ENCODE measurements at regions of chr13 and their contacts with region 1.

Region 1: GRCh38 chr13:28636674-28637317 is 22.1 kb upstream of the POMP start:
- DNase-seq: peak; percentile 65 to 95 (median 82)
- H3K4me3 ChIP-seq: no peak overlapping the region
- H3K4me3 Mint-ChIP-seq: peak overlapping the region in 1 of 2 donors; percentile 40
- H3K27ac ChIP-seq: no peak overlapping the region
- H3K27ac Mint-ChIP-seq: peak overlapping the region in 2 of 7 donors; percentile 18 to 59
- H3K4me1 ChIP-seq: peaks cover 4 to 8% of the 10 kb centered on the region in 2 donors
- H3K4me1 Mint-ChIP-seq: peaks cover 5% of the 10 kb centered on the region
- H3K27me3 ChIP-seq: peaks cover 6 to 8% of the 10 kb centered on the region in 2 donors
- H3K27me3 Mint-ChIP-seq: peaks cover 13 to 18% (median 14%) of the 10 kb centered on the region in 3 donors
- CTCF ChIP-seq: peak; percentile 90

Region 2: GRCh38 chr13:28204690-28205443 is 431.9 kb before region 1 on chr13:
- intact Hi-C with region 1: no loop called
- DNase-seq: no peak
- H3K4me3 ChIP-seq: no peak overlapping the region
- H3K4me3 Mint-ChIP-seq: no peak overlapping the region
- H3K27ac ChIP-seq: no peak overlapping the region
- H3K27ac Mint-ChIP-seq: no peak overlapping the region
- H3K4me1 ChIP-seq: no peaks in the 10 kb centered on the region
- H3K4me1 Mint-ChIP-seq: no peaks in the 10 kb centered on the region
- H3K27me3 ChIP-seq: no peaks in the 10 kb centered on the region
- H3K27me3 Mint-ChIP-seq: no peaks in the 10 kb centered on the region
- CTCF ChIP-seq: no peak

Region 3: GRCh38 chr13:28324181-28324789 is 312.5 kb before region 1 on chr13:
- intact Hi-C with region 1: loop called (anchors 1 to 5 kb)
- DNase-seq: peak; percentile 55 to 75 (median 64)
- H3K4me3 ChIP-seq: no peak overlapping the region
- H3K4me3 Mint-ChIP-seq: no peak overlapping the region
- H3K27ac ChIP-seq: no peak overlapping the region
- H3K27ac Mint-ChIP-seq: no peak overlapping the region
- H3K4me1 ChIP-seq: no peaks in the 10 kb centered on the region
- H3K4me1 Mint-ChIP-seq: no peaks in the 10 kb centered on the region
- H3K27me3 ChIP-seq: peaks cover 8 to 28% of the 10 kb centered on the region in 2 donors
- H3K27me3 Mint-ChIP-seq: peaks cover 15 to 46% (median 45%) of the 10 kb centered on the region in 3 donors
- CTCF ChIP-seq: peak; percentile 84

Region 4: DNA sequence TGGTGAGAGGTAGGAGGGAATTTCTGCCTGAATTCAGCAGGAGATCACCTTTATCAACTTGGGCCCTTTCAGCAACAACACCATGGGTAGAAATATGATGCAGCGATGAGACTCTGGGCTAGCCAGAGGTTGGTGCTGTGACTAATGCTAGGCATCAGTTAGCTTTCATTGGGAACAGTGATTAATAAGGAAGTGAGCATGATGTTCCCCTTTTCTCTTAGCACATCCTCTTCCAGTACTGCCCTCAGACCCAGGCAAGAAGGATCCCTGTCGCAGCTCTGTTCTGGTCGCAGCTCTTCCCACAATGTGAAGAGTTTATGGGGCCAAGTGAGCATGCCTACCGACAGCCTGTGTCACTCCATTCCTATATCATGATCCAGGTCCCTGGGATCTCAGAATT is 242.4 kb before region 1 on chr13:
- intact Hi-C with region 1: loop called in 1 of 2 experiments (anchors 10 kb)
- DNase-seq: peak; percentile 83 to 96 (median 95)
- H3K4me3 ChIP-seq: no peak overlapping the region
- H3K4me3 Mint-ChIP-seq: peak overlapping the region in 1 of 2 donors; percentile 26
- H3K27ac ChIP-seq: peak overlapping the region in 1 of 2 donors; percentile 29
- H3K27ac Mint-ChIP-seq: peak overlapping the region in 5 of 7 donors; percentile 5 to 76 (median 41)
- H3K4me1 ChIP-seq: peaks cover 10 to 11% of the 10 kb centered on the region in 2 donors
- H3K4me1 Mint-ChIP-seq: peaks cover 18% of the 10 kb centered on the region
- H3K27me3 ChIP-seq: peaks cover 15 to 19% of the 10 kb centered on the region in 2 donors
- H3K27me3 Mint-ChIP-seq: peaks cover 26 to 43% (median 27%) of the 10 kb centered on the region in 3 donors
- CTCF ChIP-seq: no peak

Region 5: GRCh38 chr13:28584873-28585381 is 51.9 kb before region 1 on chr13:
- intact Hi-C with region 1: loop called (anchors 5 kb)
- DNase-seq: peak in 2 of 3 donors; percentile 23 to 55
- H3K4me3 ChIP-seq: peak overlapping the region in 1 of 3 experiments; percentile 12
- H3K4me3 Mint-ChIP-seq: no peak overlapping the region
- H3K27ac ChIP-seq: peak overlapping the region in 1 of 2 donors; percentile 50
- H3K27ac Mint-ChIP-seq: peak overlapping the region; percentile 9 to 93 (median 84)
- H3K4me1 ChIP-seq: peaks cover 54 to 55% of the 10 kb centered on the region in 2 donors
- H3K4me1 Mint-ChIP-seq: peaks cover 61% of the 10 kb centered on the region
- H3K27me3 ChIP-seq: no peaks in the 10 kb centered on the region
- H3K27me3 Mint-ChIP-seq: peaks cover 0 to 6% (median 0%) of the 10 kb centered on the region in 3 donors
- CTCF ChIP-seq: no peak

Region 6: GRCh38 chr13:28778308-28779215 is 141.8 kb after region 1 on chr13:
- intact Hi-C with region 1: no loop called
- DNase-seq: no peak
- H3K4me3 ChIP-seq: no peak overlapping the region
- H3K4me3 Mint-ChIP-seq: no peak overlapping the region
- H3K27ac ChIP-seq: no peak overlapping the region
- H3K27ac Mint-ChIP-seq: no peak overlapping the region
- H3K4me1 ChIP-seq: no peaks in the 10 kb centered on the region
- H3K4me1 Mint-ChIP-seq: no peaks in the 10 kb centered on the region
- H3K27me3 ChIP-seq: no peaks in the 10 kb centered on the region
- H3K27me3 Mint-ChIP-seq: peaks cover 4 to 16% (median 4%) of the 10 kb centered on the region in 3 donors
- CTCF ChIP-seq: no peak

Region 7: DNA sequence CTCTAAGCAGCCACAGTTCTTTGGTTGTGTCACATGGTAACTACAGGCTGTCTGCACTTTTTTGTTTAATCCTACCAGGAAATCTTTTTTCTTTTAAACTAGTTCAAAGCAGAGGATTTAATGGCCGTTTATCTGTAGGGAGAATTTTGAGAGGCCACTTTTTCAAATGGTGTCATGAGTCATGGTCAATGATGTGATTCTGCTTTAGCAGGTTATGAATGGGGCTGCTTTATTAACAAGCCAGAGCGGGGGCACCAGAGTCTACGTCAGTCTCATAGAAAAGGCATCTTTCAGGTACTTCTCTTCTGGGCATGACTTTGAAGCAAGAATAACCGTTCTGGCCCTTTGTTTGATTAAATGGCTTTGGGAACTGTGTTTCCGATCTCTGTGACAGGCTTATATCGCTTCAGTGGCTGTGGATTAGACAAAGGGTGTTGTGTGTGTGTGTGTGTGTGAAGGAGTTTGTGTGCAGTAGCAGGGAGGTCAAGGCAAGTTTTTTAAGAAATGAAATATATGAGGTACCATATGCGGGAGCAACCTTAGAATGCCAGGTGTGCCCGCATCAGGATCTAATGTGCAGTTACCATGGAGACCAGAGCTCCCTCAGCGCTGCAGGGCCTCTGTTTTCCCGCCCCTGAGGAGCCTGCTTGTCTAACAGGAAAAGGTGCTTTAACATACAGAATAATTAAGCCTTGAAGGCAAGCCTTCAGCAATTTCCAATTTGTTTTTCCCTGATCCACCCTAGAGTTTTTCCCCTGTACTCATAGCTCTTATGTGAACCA is 1550.0 kb after region 1 on chr13:
- intact Hi-C with region 1: no loop called
- DNase-seq: no peak
- H3K4me3 ChIP-seq: no peak overlapping the region
- H3K4me3 Mint-ChIP-seq: no peak overlapping the region
- H3K27ac ChIP-seq: no peak overlapping the region
- H3K27ac Mint-ChIP-seq: no peak overlapping the region
- H3K4me1 ChIP-seq: no peaks in the 10 kb centered on the region
- H3K4me1 Mint-ChIP-seq: no peaks in the 10 kb centered on the region
- H3K27me3 ChIP-seq: no peaks in the 10 kb centered on the region
- H3K27me3 Mint-ChIP-seq: peaks cover 0 to 2% (median 2%) of the 10 kb centered on the region in 3 donors
- CTCF ChIP-seq: no peak

Measured in CD14-positive monocyte (primary cell).